ENCODE measurements at regions of chr3 and their contacts with region 1.

Region 1: GRCh38 chr3:54087581-54088410 is 34.6 kb upstream of the CACNA2D3 start:
- DNase-seq: no peak
- H3K4me3 ChIP-seq: no peak overlapping the region
- H3K27ac ChIP-seq: no peak overlapping the region
- H3K4me1 ChIP-seq: no peaks in the 10 kb centered on the region
- H3K27me3 ChIP-seq: peaks cover 10% of the 10 kb centered on the region
- CTCF ChIP-seq: no peak
- POLR2A ChIP-seq: no peak

Region 2: DNA sequence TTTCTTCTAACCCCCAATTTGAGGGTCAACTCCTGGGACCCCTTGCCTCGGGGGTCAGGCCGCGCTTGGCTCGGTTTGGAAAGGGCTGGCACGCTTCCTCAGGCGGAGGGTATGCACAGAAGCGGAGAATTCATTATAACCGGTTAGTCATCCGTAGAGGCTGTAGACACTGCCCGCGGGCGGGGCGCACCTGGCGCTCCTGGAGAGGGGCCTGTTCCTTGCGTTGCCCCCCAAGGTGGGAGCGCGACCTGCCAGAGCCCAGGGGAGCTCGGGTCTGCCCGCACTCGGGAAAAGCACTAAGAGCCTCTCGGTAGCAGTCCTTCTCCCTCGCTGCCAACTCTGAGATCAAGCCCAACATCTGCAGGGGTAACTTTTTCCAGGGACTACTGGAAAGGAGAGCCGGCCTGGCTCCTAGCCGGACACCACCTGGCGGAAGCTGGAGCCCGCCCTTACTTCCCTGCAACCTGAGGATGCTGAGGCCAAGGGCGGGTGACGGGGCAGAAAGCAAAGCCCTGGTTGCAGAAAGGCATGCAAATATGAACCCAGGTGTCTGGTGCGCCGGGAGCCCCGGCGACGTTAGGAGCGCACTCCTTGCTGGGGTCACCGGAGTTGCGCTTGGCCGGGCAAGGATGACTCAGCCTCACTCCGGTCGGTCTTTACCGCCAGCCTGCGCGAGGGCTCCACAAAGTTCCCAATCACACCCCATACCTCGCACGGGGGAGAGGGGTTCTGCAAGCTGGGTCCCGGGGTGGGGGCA is 33.0 kb after region 1 on chr3:
- intact Hi-C with region 1: loop called (anchors 5 kb)
- DNase-seq: no peak
- H3K4me3 ChIP-seq: peak overlapping the region; percentile 37 to 45
- H3K27ac ChIP-seq: no peak overlapping the region
- H3K4me1 ChIP-seq: peaks cover 7% of the 10 kb centered on the region
- H3K27me3 ChIP-seq: peaks cover 13% of the 10 kb centered on the region
- CTCF ChIP-seq: no peak
- POLR2A ChIP-seq: no peak

Measured in prostate gland (tissue), 2 donors.